Activated CD4-positive, alpha-beta T cell treated with anti-CD3 and anti-CD28 coated beads, Interleukin-2, amount 10 ng/mL, durations not matched to agents 24 days and 14 days (primary cell): ENCODE measurements at regions of chr12 and their contacts with region 1.

Region 1: DNA sequence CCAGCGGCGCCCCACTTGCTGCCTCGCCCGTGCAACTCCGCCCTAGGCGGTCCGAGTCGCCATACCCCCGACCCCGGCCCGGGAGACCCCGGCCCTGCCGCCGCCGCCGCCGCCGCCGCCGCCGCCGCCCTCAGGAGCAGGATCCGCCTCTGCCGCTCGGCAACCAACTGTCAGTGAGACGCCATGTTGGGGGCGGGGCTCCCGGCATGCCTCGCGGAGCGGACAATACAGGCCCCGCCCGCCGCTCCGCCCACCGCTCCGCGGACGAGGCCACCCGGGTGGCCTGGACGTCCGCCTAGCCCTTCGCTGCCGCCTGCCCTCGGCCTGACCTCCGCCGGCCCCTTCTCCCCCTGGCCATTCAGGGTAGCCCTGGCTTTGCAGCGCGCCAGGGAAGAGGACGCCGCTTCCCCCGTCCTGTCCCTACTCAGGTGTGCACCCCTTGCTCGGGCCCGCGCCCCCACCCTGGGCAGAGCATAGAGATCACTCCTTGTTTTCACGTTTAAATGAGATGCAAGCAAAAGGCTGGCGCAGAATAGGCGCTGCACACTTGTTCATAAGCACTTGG is at the start of gene HECTD4:
- DNase-seq: peak; percentile 99
- H3K4me3 Mint-ChIP-seq: peak within 1 kb of the TSS; percentile 95
- H3K27ac Mint-ChIP-seq: peak within 1 kb of the TSS; percentile 91
- H3K4me1 Mint-ChIP-seq: peaks cover 31% of the 10 kb centered on the region
- H3K27me3 Mint-ChIP-seq: no peaks in the 10 kb centered on the region
- total RNA-seq, gene HECTD4: 33.6 and 33.8 TPM in 2 replicates

Region 2: DNA sequence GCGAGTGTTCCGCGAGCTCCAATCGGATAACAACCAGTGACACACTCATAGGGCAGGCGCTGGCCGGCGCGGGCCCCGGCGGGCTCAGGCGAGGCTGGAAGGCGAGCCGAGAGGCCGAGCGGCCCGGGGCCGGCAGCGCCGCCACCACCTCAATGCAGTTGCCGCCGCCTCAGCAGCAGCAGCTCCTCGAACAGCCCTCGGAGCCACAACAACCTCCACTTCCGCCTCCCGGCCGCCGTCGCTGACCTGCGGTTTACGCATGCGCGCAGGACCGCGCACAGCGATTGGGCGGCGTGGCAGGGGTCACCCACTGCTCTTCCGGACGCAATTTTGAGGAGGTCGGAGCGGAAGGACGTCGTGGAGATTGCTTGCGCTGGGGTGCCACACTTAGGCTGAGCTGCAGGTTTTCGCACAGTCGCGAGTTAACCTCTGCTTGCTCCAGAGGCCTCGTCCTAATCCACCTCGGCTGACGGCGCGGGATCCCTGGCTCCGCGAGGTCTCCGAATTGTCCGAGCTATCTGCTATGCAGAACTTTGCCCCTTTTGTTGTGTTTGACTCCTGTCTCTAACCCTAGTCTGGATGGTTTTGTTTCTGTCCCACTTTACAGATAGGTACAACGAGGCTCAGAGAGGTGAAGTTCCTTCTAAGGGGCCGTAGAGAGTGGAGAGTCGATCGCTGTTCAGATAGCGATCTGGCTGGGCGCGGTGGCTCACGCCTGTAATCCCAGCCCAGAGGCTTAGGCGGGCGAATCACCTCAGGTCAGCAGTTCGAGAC is 696.4 kb before region 1 on chr12 and contains the starts of genes ACAD10 and BRAP:
- intact Hi-C with region 1: loop called (anchors 10 kb)
- DNase-seq: peak; percentile 99
- H3K4me3 Mint-ChIP-seq: peak within 1 kb of the TSS; percentile 99
- H3K27ac Mint-ChIP-seq: peak within 1 kb of the TSS; percentile 96
- H3K4me1 Mint-ChIP-seq: peaks cover 28% of the 10 kb centered on the region
- H3K27me3 Mint-ChIP-seq: no peaks in the 10 kb centered on the region
- total RNA-seq, gene ACAD10: 28.2 and 28.6 TPM in 2 replicates
- total RNA-seq, gene BRAP: 20.3 TPM in 2 replicates

Region 3: DNA sequence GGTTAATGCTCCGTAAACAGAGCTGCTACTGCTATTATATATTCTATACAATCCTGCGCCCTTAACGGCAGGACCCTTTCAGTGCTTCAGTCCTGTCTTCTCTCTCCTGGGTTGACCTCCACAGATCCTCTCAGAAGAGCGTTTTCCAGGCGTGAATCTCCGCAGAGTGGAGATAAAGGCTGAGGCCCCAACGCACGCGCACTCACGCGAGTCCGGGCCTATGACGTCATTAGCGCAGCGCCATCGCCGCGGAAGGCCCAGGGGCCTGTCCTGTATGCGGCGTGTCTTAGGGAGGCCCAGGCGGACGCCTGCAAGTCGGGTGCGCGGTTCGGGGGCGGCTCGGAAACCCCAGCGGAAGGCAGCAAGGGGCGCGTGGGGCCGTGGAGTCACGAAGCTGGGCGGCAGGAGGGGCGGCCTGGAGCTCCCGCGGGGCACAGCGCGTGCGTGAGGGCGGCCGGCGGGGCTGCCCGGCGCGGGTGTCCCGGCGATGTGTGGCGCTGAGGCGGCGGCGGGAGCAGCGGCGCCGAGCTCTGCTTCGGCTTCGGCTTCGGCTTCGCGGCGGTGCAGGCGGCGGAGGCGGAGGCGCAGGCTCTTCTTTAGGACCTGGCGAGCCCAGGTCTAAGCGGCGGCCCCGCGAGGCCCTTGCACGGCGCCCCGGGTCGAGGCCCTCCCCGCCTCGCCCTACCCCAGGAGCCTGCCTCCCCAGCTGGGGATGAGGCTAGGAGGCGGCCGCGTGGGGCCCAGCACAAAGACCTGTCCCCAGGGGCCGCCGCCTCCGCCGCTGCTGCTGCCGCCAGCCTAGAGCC is 540.4 kb before region 1 on chr12 and contains the start of gene MAPKAPK5:
- intact Hi-C with region 1: loop called (anchors 10 kb)
- DNase-seq: peak; percentile 99
- H3K4me3 Mint-ChIP-seq: peak within 1 kb of the TSS; percentile 98
- H3K27ac Mint-ChIP-seq: peak within 1 kb of the TSS; percentile 98
- H3K4me1 Mint-ChIP-seq: peaks cover 40% of the 10 kb centered on the region
- H3K27me3 Mint-ChIP-seq: peaks cover 2% of the 10 kb centered on the region
- total RNA-seq, gene MAPKAPK5: 76.0 and 80.2 TPM in 2 replicates

Region 4: DNA sequence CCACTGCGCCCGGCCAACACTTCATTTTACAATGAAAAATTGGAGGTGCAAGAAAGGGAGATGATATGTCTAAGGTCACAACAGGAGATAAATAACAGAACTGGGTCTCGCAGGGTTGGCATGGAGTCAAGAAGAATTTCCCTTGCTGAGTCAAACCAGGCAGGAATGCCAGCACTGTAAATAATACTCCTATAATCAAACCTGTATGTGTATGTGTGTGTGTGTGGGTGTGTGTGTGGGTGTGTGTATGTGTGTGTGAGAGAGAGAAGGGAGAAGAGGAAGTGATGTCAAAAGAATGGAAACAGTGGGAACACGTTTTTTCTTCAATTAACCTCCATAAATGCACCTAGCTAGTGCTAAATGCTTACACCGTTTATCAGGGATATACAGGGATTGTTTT is 439.8 kb before region 1 on chr12:
- intact Hi-C with region 1: loop called (anchors 2 kb)
- DNase-seq: no peak
- H3K4me3 Mint-ChIP-seq: no peak overlapping the region
- H3K27ac Mint-ChIP-seq: peak overlapping the region; percentile 77
- H3K4me1 Mint-ChIP-seq: peaks cover 13% of the 10 kb centered on the region
- H3K27me3 Mint-ChIP-seq: no peaks in the 10 kb centered on the region

Region 5: DNA sequence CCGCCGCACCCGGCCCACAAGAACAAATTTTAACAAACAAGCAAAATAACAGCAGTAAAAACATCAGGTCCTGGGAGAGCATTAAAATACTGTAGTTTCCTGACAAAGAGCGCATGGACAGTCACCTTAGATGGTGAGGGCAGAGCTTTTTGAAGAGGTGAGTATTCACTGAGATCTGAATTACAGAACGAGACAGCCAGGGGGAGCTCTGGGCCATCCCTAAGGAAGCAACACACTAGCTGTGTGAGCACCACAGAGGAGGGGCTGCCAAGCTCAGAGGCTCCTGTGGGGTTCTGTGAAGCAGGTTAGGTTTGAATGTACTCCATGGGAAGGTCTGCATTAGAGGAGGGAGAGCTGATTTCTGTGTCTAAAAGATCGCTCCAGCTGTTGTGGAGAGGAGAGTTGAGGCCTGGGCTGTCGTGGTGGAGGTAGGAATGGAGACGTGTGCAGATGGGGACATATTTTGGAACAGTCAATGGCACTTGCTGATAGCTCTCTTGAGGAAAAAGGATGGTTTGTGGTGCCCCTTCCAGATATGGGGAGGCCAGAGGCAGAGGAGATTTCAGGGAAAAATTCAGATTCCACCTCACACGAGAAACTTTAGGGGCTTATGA is 184.1 kb before region 1 on chr12:
- intact Hi-C with region 1: loop called (anchors 1 kb)
- DNase-seq: peak; percentile 86
- H3K4me3 Mint-ChIP-seq: no peak overlapping the region
- H3K27ac Mint-ChIP-seq: no peak overlapping the region
- H3K4me1 Mint-ChIP-seq: no peaks in the 10 kb centered on the region
- H3K27me3 Mint-ChIP-seq: no peaks in the 10 kb centered on the region

Region 6: GRCh38 chr12:112303004-112303403 is 79.3 kb before region 1 on chr12:
- intact Hi-C with region 1: loop called (anchors 5 kb)
- DNase-seq: peak; percentile 85
- H3K4me3 Mint-ChIP-seq: no peak overlapping the region
- H3K27ac Mint-ChIP-seq: peak overlapping the region; percentile 40
- H3K4me1 Mint-ChIP-seq: peaks cover 6% of the 10 kb centered on the region
- H3K27me3 Mint-ChIP-seq: no peaks in the 10 kb centered on the region

Region 7: DNA sequence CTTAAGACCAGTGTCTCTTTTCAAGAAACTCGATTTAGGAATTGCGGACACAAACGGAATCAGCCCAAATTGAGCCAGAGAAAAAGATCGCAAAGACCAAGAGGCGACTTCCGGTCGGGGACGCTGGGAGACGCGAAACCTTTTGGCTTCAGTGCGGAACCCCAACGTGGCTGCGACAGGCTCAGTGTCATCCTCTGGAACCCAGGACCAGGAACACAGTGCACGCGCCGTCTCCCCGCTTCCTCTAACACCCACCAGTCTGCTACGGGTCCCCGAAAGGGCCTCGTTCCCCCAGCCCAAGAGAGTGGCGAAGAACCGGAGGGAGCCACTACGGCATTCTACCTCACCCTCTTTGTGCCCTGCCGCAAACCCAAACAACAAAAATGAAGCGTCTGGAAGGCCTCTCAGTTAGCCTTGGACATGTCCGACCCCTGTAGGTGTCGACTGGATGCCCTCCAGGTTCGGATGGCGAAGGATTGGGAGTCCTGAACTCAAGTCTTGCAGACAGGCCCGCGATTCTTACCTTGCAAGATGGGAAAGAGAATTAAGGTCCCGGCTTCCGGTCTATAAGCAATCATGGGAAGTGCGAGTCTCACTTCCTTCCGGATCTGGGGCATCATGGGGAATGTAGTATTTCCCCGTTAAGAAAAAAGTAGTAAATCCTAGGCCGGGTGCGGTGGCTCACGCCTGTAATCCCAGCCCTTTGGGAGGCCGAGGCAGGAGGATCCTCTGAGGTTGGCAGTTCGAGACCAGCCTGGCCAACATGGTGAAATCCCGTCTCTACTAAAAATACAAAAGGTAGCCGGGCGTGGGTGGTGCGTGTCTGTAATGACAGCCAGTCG is 27.0 kb after region 1 on chr12 and contains the start of gene RPL6:
- intact Hi-C with region 1: loop called (anchors 1 kb)
- DNase-seq: peak; percentile 94
- H3K4me3 Mint-ChIP-seq: peak within 1 kb of the TSS; percentile 93
- H3K27ac Mint-ChIP-seq: peak within 1 kb of the TSS; percentile 100
- H3K4me1 Mint-ChIP-seq: peaks cover 27% of the 10 kb centered on the region
- H3K27me3 Mint-ChIP-seq: no peaks in the 10 kb centered on the region
- total RNA-seq, gene RPL6: 1,820 and 1,848 TPM in 2 replicates

Region 8: GRCh38 chr12:112450725-112451124 is 68.4 kb after region 1 on chr12:
- intact Hi-C with region 1: no loop called
- DNase-seq: no peak
- H3K4me3 Mint-ChIP-seq: no peak overlapping the region
- H3K27ac Mint-ChIP-seq: no peak overlapping the region
- H3K4me1 Mint-ChIP-seq: peaks cover 16% of the 10 kb centered on the region
- H3K27me3 Mint-ChIP-seq: no peaks in the 10 kb centered on the region